GM10248 (cell line): ENCODE measurements at regions of chr18 and their contacts with region 1.

Region 1: GRCh38 chr18:59011786-59012185 is 127.9 kb upstream of the SEC11C start:
- DNase-seq: no peak
- CTCF ChIP-seq: no peak

Region 2: GRCh38 chr18:59022167-59022945 is 10.6 kb after region 1 on chr18:
- CTCF ChIA-PET with region 1: interaction called, 13 read pairs
- POLR2A ChIA-PET with region 1: no interaction called
- DNase-seq: no peak
- CTCF ChIP-seq: no peak